Esophagus squamous epithelium (tissue), 5 donors: ENCODE measurements at regions of chr2 and their contacts with region 1.

Region 1: GRCh38 chr2:118865106-118865505 is 17.7 kb upstream of the EN1 start:
- DNase-seq: no peak
- H3K4me3 ChIP-seq: no peak overlapping the region
- H3K27ac ChIP-seq: no peak overlapping the region
- H3K4me1 ChIP-seq: no peaks in the 10 kb centered on the region
- H3K27me3 ChIP-seq: peaks cover 0 to 63% (median 1%) of the 10 kb centered on the region in 4 donors
- CTCF ChIP-seq: peak in 5 of 6 experiments; percentile 34 to 58 (median 42)
- POLR2A ChIP-seq: no peak

Region 2: DNA sequence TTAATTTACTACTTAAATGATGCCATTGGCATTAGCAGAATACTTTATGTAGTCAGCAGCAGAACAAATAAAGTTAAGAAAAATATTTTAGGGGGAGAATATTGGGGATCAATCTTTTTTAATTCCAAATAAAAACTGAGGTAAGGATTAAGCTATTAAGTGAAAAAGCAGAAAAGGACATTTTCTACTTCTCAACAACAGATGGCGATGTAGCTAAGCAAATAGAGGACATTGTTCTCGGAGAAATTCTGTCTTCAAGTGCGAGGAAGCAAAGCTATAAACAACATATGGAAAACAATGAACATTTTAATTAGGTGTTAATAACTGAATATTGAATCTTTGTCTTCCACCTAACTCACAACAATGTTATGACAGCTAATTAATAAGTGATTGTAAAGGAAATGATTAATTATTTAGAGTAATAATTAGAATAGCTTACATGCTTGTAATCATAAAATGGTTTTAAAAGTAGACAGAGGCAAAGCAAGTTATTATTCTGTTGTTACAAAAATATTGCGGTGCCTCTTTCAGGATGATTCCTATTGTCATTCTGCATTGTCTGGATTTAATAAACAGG is 818.4 kb before region 1 on chr2:
- intact Hi-C with region 1: loop called (anchors 5 kb)
- DNase-seq: no peak
- H3K4me3 ChIP-seq: no peak overlapping the region
- H3K27ac ChIP-seq: no peak overlapping the region
- H3K4me1 ChIP-seq: no peaks in the 10 kb centered on the region
- H3K27me3 ChIP-seq: peaks cover 0 to 81% (median 0%) of the 10 kb centered on the region in 4 donors
- CTCF ChIP-seq: peak; percentile 27 to 58 (median 46)
- POLR2A ChIP-seq: no peak

Region 3: GRCh38 chr2:118224895-118225311 is 640.2 kb before region 1 on chr2:
- intact Hi-C with region 1: loop called (anchors 5 kb)
- DNase-seq: no peak
- H3K4me3 ChIP-seq: peak overlapping the region in 1 of 4 donors; percentile 67
- H3K27ac ChIP-seq: no peak overlapping the region
- H3K4me1 ChIP-seq: peaks cover 7 to 17% (median 9%) of the 10 kb centered on the region in 3 donors
- H3K27me3 ChIP-seq: peaks cover 11 to 98% (median 28%) of the 10 kb centered on the region in 4 donors
- CTCF ChIP-seq: no peak
- POLR2A ChIP-seq: no peak

Region 4: DNA sequence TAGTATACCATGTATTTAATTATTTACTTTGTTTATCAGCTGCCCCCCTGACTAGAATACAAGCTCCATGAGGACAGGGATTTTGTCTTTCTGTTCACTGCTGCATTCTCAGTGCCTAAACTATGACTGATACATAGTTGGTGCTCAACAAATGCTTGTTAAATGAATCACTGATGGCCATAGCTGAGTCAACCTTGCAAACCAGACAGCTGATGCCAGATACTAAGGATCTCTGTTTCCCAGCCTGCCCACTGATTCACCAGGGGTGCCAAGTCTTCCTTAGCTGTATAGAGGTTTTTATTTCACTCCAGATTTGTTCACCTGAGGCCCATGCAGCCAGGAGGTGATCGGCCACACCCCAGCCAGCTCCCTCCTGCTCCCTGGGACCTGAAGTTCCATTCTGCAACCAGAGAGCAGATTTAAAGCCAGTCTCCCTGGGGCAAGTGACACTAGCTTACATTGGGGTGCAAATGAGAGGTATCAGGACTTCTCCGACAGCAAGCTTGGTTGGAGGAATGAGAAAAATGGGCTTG is 201.2 kb after region 1 on chr2:
- intact Hi-C with region 1: no loop called
- DNase-seq: no peak
- H3K4me3 ChIP-seq: no peak overlapping the region
- H3K27ac ChIP-seq: no peak overlapping the region
- H3K4me1 ChIP-seq: no peaks in the 10 kb centered on the region
- H3K27me3 ChIP-seq: peaks cover 0 to 8% (median 0%) of the 10 kb centered on the region in 4 donors
- CTCF ChIP-seq: no peak
- POLR2A ChIP-seq: no peak